AG04450 (cell line): ENCODE measurements at regions of chr14 and their contacts with region 1.

Region 1: GRCh38 chr14:23006544-23007419 is 3.2 kb downstream of the C14orf93 start:
- DNase-seq: peak; percentile 95
- H3K4me3 ChIP-seq: peak overlapping the region; percentile 80
- H3K27ac ChIP-seq: peak overlapping the region; percentile 92
- H3K27me3 ChIP-seq: no peaks in the 10 kb centered on the region
- CTCF ChIP-seq: peak; percentile 40

Region 2: GRCh38 chr14:22822571-22823098 is 184.1 kb before region 1 on chr14:
- CTCF ChIA-PET with region 1: no interaction called
- POLR2A ChIA-PET with region 1: no interaction called
- DNase-seq: peak; percentile 62
- H3K4me3 ChIP-seq: peak overlapping the region; percentile 34
- H3K27ac ChIP-seq: peak overlapping the region; percentile 65
- H3K27me3 ChIP-seq: no peaks in the 10 kb centered on the region
- CTCF ChIP-seq: peak; percentile 87

Region 3: GRCh38 chr14:23034483-23035302 is 27.9 kb after region 1 on chr14 and contains the start of gene PSMB5:
- CTCF ChIA-PET with region 1: no interaction called
- POLR2A ChIA-PET with region 1: interaction called, 11 read pairs
- DNase-seq: peak; percentile 83
- H3K4me3 ChIP-seq: peak within 1 kb of the TSS; percentile 93
- H3K27ac ChIP-seq: peak within 1 kb of the TSS; percentile 94
- H3K27me3 ChIP-seq: no peaks in the 10 kb centered on the region
- CTCF ChIP-seq: no peak
- polyA plus RNA-seq, gene PSMB5: 282 and 292 TPM in 2 replicates

Region 4: GRCh38 chr14:23147676-23148075 is 140.9 kb after region 1 on chr14:
- CTCF ChIA-PET with region 1: no interaction called
- POLR2A ChIA-PET with region 1: no interaction called
- DNase-seq: peak; percentile 27
- H3K4me3 ChIP-seq: no peak overlapping the region
- H3K27ac ChIP-seq: no peak overlapping the region
- H3K27me3 ChIP-seq: peaks cover 17% of the 10 kb centered on the region
- CTCF ChIP-seq: no peak